Endothelial cell of umbilical vein (primary cell): ENCODE measurements at regions of chr13 and their contacts with region 1.

Region 1: DNA sequence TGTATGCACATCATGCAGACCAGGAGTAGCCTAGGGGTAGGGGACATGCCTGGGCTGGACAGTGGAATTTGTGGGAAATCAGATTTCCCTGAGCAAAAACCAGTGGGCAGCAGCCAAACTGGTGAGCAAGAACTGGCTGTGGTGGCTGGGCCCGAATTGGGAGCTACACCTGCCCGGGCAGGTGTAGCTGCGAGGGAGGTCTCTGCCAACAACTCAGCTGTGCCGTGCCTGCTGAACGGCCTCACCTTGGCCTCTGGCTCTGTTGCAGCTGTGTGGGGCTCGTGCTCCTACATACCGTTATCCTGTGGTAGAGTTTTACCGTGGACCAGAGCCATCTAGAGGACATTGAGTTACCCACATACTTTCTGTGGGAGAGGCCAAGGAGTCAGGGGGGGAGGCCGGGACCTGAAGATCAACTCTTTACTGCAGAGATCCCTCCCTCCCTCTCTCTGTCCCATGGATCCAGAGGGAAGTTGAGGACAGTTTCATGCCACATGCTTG is 113.2 kb downstream of the TM9SF2 start:
- DNase-seq: peak; percentile 45
- H3K4me3 ChIP-seq: no peak overlapping the region
- H3K27ac ChIP-seq: no peak overlapping the region
- H3K4me1 ChIP-seq: no peaks in the 10 kb centered on the region
- H3K27me3 ChIP-seq: no peaks in the 10 kb centered on the region
- CTCF ChIP-seq: peak in 1 of 2 donors; percentile 50
- POLR2A ChIP-seq: no peak

Region 2: DNA sequence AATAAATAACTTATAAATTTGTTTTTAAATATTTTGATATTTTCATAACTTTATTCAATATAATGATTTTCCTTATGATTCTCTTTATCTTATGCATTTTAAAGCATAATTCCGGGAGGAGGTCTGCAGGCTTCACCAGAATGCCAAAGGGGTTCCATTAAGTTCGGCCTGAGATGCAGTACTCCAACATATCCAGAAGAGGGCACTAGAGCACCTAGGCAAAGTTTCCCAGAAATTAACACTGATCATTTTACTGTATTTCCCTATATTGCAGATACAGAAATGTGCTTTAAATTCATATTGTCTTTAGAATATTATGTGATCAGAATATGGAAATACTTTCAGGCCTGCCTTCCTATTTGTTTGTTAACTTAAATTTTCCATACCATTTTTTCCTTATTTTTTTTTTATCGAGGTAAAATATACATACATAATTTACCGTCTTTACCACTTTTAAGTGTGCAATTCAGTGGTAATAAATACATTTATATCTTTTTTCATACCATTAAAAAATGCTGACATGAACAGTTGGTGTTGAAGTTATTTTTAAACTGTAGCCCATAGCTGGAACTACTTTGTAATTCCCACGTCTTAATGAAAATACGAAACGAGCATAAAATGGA is 172.1 kb before region 1 on chr13:
- CTCF ChIA-PET with region 1: interaction called, 3 read pairs
- POLR2A ChIA-PET with region 1: no interaction called
- dilution Hi-C with region 1: no loop called
- intact Hi-C with region 1: loop called (anchors 1 kb)
- DNase-seq: peak; percentile 58
- H3K4me3 ChIP-seq: no peak overlapping the region
- H3K27ac ChIP-seq: no peak overlapping the region
- H3K4me1 ChIP-seq: no peaks in the 10 kb centered on the region
- H3K27me3 ChIP-seq: peaks cover 13 to 29% of the 10 kb centered on the region in 2 experiments
- CTCF ChIP-seq: peak; percentile 66 to 77
- POLR2A ChIP-seq: no peak

Region 3: GRCh38 chr13:99528547-99528946 is 85.9 kb before region 1 on chr13:
- CTCF ChIA-PET with region 1: no interaction called
- POLR2A ChIA-PET with region 1: no interaction called
- dilution Hi-C with region 1: no loop called
- intact Hi-C with region 1: loop called (anchors 5 kb)
- DNase-seq: peak; percentile 24
- H3K4me3 ChIP-seq: no peak overlapping the region
- H3K27ac ChIP-seq: no peak overlapping the region
- H3K4me1 ChIP-seq: no peaks in the 10 kb centered on the region
- H3K27me3 ChIP-seq: no peaks in the 10 kb centered on the region
- CTCF ChIP-seq: no peak
- POLR2A ChIP-seq: no peak

Region 4: DNA sequence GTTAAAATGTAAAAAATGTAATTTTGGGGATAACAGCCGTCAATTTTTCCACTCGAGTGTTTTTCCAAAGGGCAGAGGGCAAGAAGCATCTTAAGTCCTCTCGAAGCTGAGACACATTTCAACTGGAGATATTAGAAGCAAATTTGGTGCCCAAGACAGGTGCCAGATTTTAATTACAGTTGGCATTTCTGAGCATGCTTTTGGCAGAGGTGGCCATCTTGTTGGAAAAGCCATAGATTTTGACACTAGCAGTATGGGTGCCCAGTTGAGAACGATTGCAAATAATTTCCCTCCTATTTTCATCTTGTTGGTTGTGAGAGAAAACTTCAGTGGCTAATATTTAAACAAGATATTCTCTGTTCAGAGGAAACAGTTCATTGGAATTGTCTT is 33.2 kb after region 1 on chr13:
- CTCF ChIA-PET with region 1: no interaction called
- POLR2A ChIA-PET with region 1: no interaction called
- dilution Hi-C with region 1: no loop called
- intact Hi-C with region 1: no loop called
- DNase-seq: no peak
- H3K4me3 ChIP-seq: no peak overlapping the region
- H3K27ac ChIP-seq: no peak overlapping the region
- H3K4me1 ChIP-seq: no peaks in the 10 kb centered on the region
- H3K27me3 ChIP-seq: peaks cover 0 to 4% of the 10 kb centered on the region in 2 experiments
- CTCF ChIP-seq: no peak
- POLR2A ChIP-seq: no peak

Region 5: GRCh38 chr13:99721606-99722337 is 107.3 kb after region 1 on chr13:
- CTCF ChIA-PET with region 1: no interaction called
- POLR2A ChIA-PET with region 1: no interaction called
- dilution Hi-C with region 1: no loop called
- intact Hi-C with region 1: no loop called
- DNase-seq: no peak
- H3K4me3 ChIP-seq: no peak overlapping the region
- H3K27ac ChIP-seq: no peak overlapping the region
- H3K4me1 ChIP-seq: no peaks in the 10 kb centered on the region
- H3K27me3 ChIP-seq: no peaks in the 10 kb centered on the region
- CTCF ChIP-seq: no peak
- POLR2A ChIP-seq: no peak

Region 6: GRCh38 chr13:100039740-100040139 is 425.3 kb after region 1 on chr13:
- CTCF ChIA-PET with region 1: no interaction called
- POLR2A ChIA-PET with region 1: no interaction called
- dilution Hi-C with region 1: no loop called
- intact Hi-C with region 1: no loop called
- DNase-seq: no peak
- H3K4me3 ChIP-seq: no peak overlapping the region
- H3K27ac ChIP-seq: no peak overlapping the region
- H3K4me1 ChIP-seq: no peaks in the 10 kb centered on the region
- H3K27me3 ChIP-seq: no peaks in the 10 kb centered on the region
- CTCF ChIP-seq: no peak
- POLR2A ChIP-seq: no peak